ENCODE measurements at regions of chr5 and their contacts with region 1.

Region 1: DNA sequence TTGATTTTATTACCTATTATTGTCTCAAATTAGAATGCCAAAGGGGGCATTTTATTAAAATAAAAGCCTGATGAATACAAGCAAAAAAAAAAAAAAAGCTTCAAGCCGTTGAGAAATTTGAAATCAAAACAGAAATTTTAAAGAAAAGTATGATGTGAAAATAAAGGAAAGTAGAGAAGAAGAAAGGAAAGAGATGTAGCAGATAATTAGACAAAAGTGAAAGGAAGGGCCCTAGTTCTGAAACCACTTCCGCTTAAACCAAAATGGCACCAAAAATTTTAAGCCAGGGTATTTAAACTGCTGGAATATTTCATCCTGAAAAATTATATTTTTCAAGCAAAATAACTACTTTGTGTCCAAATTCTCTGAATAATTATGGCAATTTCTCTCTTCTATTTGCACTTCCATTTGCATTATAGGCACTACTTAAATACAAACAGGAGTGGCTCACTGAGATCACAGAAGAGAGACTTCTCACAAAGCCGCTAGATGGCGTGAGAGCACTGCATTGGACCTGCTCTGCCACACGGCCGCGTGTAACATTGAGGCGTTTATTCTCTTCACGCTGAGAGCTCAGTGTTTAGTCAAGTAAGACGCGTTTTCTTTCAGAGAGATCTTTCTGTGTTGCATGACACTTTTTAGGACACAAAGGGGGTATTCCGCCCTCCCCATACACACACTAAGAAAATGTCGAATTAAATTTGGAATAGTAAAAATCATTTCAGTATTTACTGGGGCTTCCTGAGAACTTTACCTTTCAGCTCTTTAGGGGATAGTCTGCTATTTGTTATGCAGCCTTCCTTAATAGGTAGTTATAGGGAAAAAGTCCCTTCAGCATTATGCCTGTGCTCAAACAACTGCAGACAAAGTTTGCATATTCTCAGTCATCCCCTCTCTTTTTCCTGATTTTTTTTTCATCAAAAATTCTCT is 368.4 kb upstream of the CCNH start:
- DNase-seq: peak; percentile 88
- H3K4me3 Mint-ChIP-seq: no peak overlapping the region
- H3K27ac Mint-ChIP-seq: no peak overlapping the region
- H3K4me1 Mint-ChIP-seq: peaks cover 3% of the 10 kb centered on the region
- H3K27me3 Mint-ChIP-seq: peaks cover 24% of the 10 kb centered on the region

Region 2: GRCh38 chr5:87421307-87421706 is 359.8 kb before region 1 on chr5:
- CTCF ChIA-PET with region 1: no interaction called
- intact Hi-C with region 1: loop called (anchors 5 kb)
- DNase-seq: no peak
- H3K4me3 Mint-ChIP-seq: no peak overlapping the region
- H3K27ac Mint-ChIP-seq: no peak overlapping the region
- H3K4me1 Mint-ChIP-seq: no peaks in the 10 kb centered on the region
- H3K27me3 Mint-ChIP-seq: no peaks in the 10 kb centered on the region

Region 3: DNA sequence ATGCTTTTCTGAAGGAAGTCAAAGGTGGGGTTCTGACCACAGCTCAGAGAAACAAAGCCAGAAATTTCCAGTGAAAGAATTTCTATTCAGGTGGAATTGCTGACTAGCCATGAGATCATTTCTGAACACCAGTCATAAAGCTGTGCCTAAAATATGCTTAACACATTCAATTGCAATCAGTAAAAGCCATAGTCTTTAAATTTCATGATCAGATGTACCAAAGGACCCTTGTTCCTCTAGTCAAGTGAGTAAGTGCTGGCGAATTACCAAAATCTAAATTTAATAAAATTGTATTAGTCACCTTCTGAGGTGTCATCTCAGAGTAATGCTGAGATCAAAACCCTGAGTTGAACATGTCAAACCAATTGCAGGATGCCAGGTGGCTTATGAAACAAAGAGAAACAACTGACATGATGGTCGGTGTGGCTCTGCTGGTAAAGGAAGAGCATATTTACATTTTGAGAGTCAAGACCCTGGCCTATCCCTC is 34.2 kb before region 1 on chr5:
- CTCF ChIA-PET with region 1: no interaction called
- intact Hi-C with region 1: no loop called
- DNase-seq: no peak
- H3K4me3 Mint-ChIP-seq: no peak overlapping the region
- H3K27ac Mint-ChIP-seq: no peak overlapping the region
- H3K4me1 Mint-ChIP-seq: no peaks in the 10 kb centered on the region
- H3K27me3 Mint-ChIP-seq: peaks cover 7% of the 10 kb centered on the region

Region 4: GRCh38 chr5:88690409-88691229 is 909.5 kb after region 1 on chr5:
- CTCF ChIA-PET with region 1: interaction called, 33 read pairs
- intact Hi-C with region 1: loop called (anchors 1 kb)
- DNase-seq: peak; percentile 77
- H3K4me3 Mint-ChIP-seq: peak overlapping the region; percentile 65
- H3K27ac Mint-ChIP-seq: peak overlapping the region; percentile 81
- H3K4me1 Mint-ChIP-seq: peaks cover 28% of the 10 kb centered on the region
- H3K27me3 Mint-ChIP-seq: peaks cover 84% of the 10 kb centered on the region

Region 5: GRCh38 chr5:88724201-88724600 is 943.1 kb after region 1 on chr5:
- CTCF ChIA-PET with region 1: interaction called, 31 read pairs
- intact Hi-C with region 1: loop called (anchors 1 kb)
- DNase-seq: no peak
- H3K4me3 Mint-ChIP-seq: no peak overlapping the region
- H3K27ac Mint-ChIP-seq: no peak overlapping the region
- H3K4me1 Mint-ChIP-seq: no peaks in the 10 kb centered on the region
- H3K27me3 Mint-ChIP-seq: peaks cover 23% of the 10 kb centered on the region

Region 6: DNA sequence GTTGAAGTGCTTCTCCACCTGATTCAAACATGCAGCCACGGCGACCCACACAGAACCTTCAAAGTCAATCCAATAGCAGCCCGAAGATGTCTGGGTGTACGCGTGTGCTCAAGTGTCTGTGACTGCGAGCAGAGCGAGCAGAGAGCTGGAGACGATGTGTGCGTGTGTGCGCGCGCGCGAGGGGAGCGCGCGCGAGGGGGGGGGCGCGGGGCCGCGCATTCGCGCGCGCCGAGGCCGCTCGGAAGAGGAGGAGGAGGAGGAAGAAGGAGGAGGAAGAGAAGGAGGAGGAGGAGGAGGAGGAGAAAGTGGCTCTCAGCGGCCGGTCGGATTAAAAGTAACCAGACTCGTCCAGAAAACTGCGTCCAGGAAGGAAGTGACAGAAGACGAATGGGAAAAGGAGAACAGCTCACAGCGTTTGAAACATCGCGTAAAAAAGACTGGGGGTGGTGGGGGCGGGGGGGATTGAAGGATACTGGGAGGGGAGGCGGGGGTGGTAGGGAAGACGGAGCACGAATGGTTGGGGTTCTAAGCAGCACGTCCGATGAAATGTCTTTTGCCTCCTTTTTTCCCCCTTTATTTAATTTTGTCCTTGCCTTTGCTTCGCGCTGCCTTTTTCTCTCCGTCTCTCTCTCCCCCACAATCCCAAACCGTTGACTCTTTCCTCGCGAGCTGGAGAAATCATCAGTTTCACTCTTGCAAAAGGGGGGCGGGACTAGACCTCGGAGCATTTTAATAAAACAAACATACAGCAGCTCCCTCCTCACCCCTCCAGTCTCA is 1102.2 kb after region 1 on chr5 and contains the start of gene MEF2C:
- CTCF ChIA-PET with region 1: no interaction called
- intact Hi-C with region 1: loop called (anchors 5 kb)
- DNase-seq: peak; percentile 12
- H3K4me3 Mint-ChIP-seq: peak within 1 kb of the TSS; percentile 76
- H3K27ac Mint-ChIP-seq: no peak within 1 kb of the TSS
- H3K4me1 Mint-ChIP-seq: peaks cover 20% of the 10 kb centered on the region
- H3K27me3 Mint-ChIP-seq: peaks cover 57% of the 10 kb centered on the region
- total RNA-seq, gene MEF2C: not detected